AG04450 (cell line): ENCODE measurements at regions of chr12 and their contacts with region 1.

Region 1: GRCh38 chr12:121793838-121794533 is 498 bp upstream of the RHOF start:
- DNase-seq: peak; percentile 77
- H3K4me3 ChIP-seq: peak overlapping the region; percentile 65
- H3K27ac ChIP-seq: peak overlapping the region; percentile 89
- H3K27me3 ChIP-seq: no peaks in the 10 kb centered on the region
- CTCF ChIP-seq: peak; percentile 100

Region 2: GRCh38 chr12:121712461-121713256 is 81.3 kb before region 1 on chr12 and contains the start of gene TMEM120B:
- CTCF ChIA-PET with region 1: interaction called, 20 read pairs
- POLR2A ChIA-PET with region 1: interaction called, 4 read pairs
- DNase-seq: no peak
- H3K4me3 ChIP-seq: peak within 1 kb of the TSS; percentile 93
- H3K27ac ChIP-seq: peak within 1 kb of the TSS; percentile 68
- H3K27me3 ChIP-seq: no peaks in the 10 kb centered on the region
- CTCF ChIP-seq: no peak
- polyA plus RNA-seq, gene TMEM120B: 11.1 and 13.3 TPM in 2 replicates

Region 3: GRCh38 chr12:121811434-121812319 is 17.7 kb after region 1 on chr12:
- CTCF ChIA-PET with region 1: interaction called, 143 read pairs
- POLR2A ChIA-PET with region 1: interaction called, 58 read pairs
- DNase-seq: no peak
- H3K4me3 ChIP-seq: peak overlapping the region; percentile 77
- H3K27ac ChIP-seq: peak overlapping the region; percentile 61
- H3K27me3 ChIP-seq: no peaks in the 10 kb centered on the region
- CTCF ChIP-seq: peak; percentile 77

Region 4: GRCh38 chr12:121858662-121859572 is 64.9 kb after region 1 on chr12 and contains the start of gene HPD:
- CTCF ChIA-PET with region 1: interaction called, 12 read pairs
- POLR2A ChIA-PET with region 1: no interaction called
- DNase-seq: peak; percentile 41
- H3K4me3 ChIP-seq: no peak within 1 kb of the TSS
- H3K27ac ChIP-seq: peak within 1 kb of the TSS; percentile 25
- H3K27me3 ChIP-seq: no peaks in the 10 kb centered on the region
- CTCF ChIP-seq: no peak
- polyA plus RNA-seq, gene HPD: 0.05 TPM in 1 of 2 replicates, not detected in the other

Region 5: DNA sequence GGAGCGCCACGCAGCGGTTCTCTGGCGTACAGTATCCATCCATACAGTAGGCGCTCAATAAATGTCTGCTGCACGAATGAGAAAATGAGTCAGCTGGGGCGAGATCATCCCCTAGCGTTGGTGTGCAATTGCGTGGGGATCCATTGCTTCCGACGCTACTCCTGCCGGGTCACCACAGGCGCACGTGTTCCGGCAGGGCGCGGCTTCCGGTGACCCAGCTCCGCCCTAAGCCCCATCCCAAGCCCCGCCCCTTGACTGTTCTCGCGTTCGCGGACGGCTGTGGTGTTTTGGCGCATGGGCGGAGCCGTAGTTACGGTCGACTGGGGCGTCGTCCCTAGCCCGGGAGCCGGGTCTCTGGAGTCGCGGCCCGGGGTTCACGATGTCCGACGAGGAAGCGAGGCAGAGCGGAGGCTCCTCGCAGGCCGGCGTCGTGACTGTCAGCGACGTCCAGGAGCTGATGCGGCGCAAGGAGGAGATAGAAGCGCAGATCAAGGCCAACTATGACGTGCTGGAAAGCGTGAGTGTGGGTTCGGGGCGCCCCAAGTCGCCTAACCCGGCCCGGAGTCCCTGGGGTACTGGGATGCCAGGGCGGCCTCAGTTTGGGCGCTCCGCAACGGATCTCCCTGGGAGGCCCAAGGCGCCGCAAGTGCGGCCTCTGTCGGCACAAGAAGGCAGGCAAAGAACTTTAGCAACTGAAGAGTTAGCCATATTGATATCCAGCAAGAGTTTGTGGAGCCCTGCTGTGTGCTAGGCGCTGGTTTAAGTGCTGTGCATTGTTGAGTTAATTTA is 94.7 kb after region 1 on chr12 and contains the start of gene PSMD9:
- CTCF ChIA-PET with region 1: interaction called, 111 read pairs
- POLR2A ChIA-PET with region 1: interaction called, 11 read pairs
- DNase-seq: peak; percentile 94
- H3K4me3 ChIP-seq: peak within 1 kb of the TSS; percentile 94
- H3K27ac ChIP-seq: peak within 1 kb of the TSS; percentile 98
- H3K27me3 ChIP-seq: no peaks in the 10 kb centered on the region
- CTCF ChIP-seq: peak; percentile 87
- polyA plus RNA-seq, gene PSMD9: 57.7 and 76.1 TPM in 2 replicates

Region 6: GRCh38 chr12:122537021-122537420 is 743.0 kb after region 1 on chr12:
- CTCF ChIA-PET with region 1: no interaction called
- POLR2A ChIA-PET with region 1: no interaction called
- DNase-seq: no peak
- H3K4me3 ChIP-seq: no peak overlapping the region
- H3K27ac ChIP-seq: no peak overlapping the region
- H3K27me3 ChIP-seq: no peaks in the 10 kb centered on the region
- CTCF ChIP-seq: no peak

Region 7: DNA sequence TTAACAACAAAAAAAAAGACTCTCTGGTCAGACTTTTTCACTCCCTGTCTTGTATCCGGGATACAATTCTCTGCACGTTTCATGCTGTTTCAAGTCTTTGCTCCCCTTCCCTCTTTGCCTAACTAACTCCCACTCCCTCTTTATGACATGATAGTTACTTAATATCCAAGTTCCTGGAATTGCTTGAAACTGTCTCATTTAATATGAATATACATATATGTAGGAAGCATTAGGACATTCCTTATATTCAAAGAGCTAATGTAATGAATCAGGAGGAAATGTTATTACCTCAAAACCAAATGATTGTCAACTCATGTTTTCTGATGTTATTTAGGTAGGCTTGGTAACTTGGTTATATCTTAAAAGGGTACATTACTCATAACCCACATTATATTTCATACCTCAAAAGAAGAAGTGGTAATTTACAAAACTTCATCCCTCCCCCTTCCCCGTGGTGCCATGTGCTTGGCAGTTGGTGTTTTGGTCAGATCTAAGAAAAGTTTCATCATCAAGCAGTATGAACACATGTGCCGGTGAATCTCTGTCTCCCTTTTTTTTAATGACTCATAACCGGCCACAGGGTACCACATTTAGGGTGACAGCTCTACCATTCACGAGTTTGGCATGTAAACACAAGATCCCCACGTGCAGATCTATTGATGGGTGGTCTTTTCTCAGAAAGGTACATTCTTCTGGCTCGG is 852.7 kb after region 1 on chr12:
- CTCF ChIA-PET with region 1: no interaction called
- POLR2A ChIA-PET with region 1: no interaction called
- DNase-seq: peak; percentile 60
- H3K4me3 ChIP-seq: no peak overlapping the region
- H3K27ac ChIP-seq: peak overlapping the region; percentile 39
- H3K27me3 ChIP-seq: no peaks in the 10 kb centered on the region
- CTCF ChIP-seq: no peak